ENCODE measurements at regions of chr13 and their contacts with region 1.

Region 1: GRCh38 chr13:48580185-48580803 is 47.4 kb upstream of the RCBTB2 start:
- DNase-seq: peak; percentile 56 to 86 (median 66)
- ATAC-seq: peak; percentile 39 to 51
- H3K4me3 ChIP-seq: no peak overlapping the region
- H3K27ac ChIP-seq: no peak overlapping the region
- H3K4me1 ChIP-seq: peaks cover 9% of the 10 kb centered on the region
- H3K27me3 ChIP-seq: no peaks in the 10 kb centered on the region

Region 2: GRCh38 chr13:48126944-48127830 is 453.1 kb before region 1 on chr13:
- intact Hi-C with region 1: loop called in 1 of 4 experiments (anchors 10 kb)
- DNase-seq: peak; percentile 83 to 94 (median 92)
- ATAC-seq: peak; percentile 81 to 88
- H3K4me3 ChIP-seq: no peak overlapping the region
- H3K27ac ChIP-seq: peak overlapping the region; percentile 82
- H3K4me1 ChIP-seq: peaks cover 4% of the 10 kb centered on the region
- H3K27me3 ChIP-seq: no peaks in the 10 kb centered on the region

Region 3: GRCh38 chr13:48334534-48335127 is 245.7 kb before region 1 on chr13:
- intact Hi-C with region 1: loop called (anchors 2 to 10 kb)
- DNase-seq: no peak
- ATAC-seq: no peak
- H3K4me3 ChIP-seq: no peak overlapping the region
- H3K27ac ChIP-seq: no peak overlapping the region
- H3K4me1 ChIP-seq: no peaks in the 10 kb centered on the region
- H3K27me3 ChIP-seq: no peaks in the 10 kb centered on the region

Region 4: GRCh38 chr13:48400850-48401291 is 179.4 kb before region 1 on chr13:
- intact Hi-C with region 1: loop called in 1 of 4 experiments (anchors 10 kb)
- DNase-seq: no peak
- ATAC-seq: peak; percentile 77 to 79
- H3K4me3 ChIP-seq: no peak overlapping the region
- H3K27ac ChIP-seq: no peak overlapping the region
- H3K4me1 ChIP-seq: no peaks in the 10 kb centered on the region
- H3K27me3 ChIP-seq: no peaks in the 10 kb centered on the region

Region 5: GRCh38 chr13:48412881-48413351 is 167.4 kb before region 1 on chr13 and contains the start of gene LPAR6:
- intact Hi-C with region 1: loop called in 2 of 4 experiments (anchors 10 kb)
- DNase-seq: peak in 1 of 3 donors; percentile 46
- ATAC-seq: peak; percentile 85 to 96
- H3K4me3 ChIP-seq: peak within 1 kb of the TSS; percentile 97
- H3K27ac ChIP-seq: peak within 1 kb of the TSS; percentile 82
- H3K4me1 ChIP-seq: peaks cover 2% of the 10 kb centered on the region
- H3K27me3 ChIP-seq: no peaks in the 10 kb centered on the region
- total RNA-seq, gene LPAR6: 11.5 to 17.4 (median 13.6) TPM

Measured in right cardiac atrium (tissue), 5 donors.